Activated naive CD4-positive, alpha-beta T cell treated with anti-CD3 and anti-CD28 coated beads for 36 hours (primary cell): ENCODE measurements at regions of chr11 and their contacts with region 1.

Region 1: GRCh38 chr11:58524232-58525036 is 16.5 kb upstream of the OR5B21 start:
- DNase-seq: peak; percentile 67
- H3K4me3 Mint-ChIP-seq: peak overlapping the region; percentile 61
- H3K27ac Mint-ChIP-seq: peak overlapping the region; percentile 86
- H3K4me1 Mint-ChIP-seq: peaks cover 52% of the 10 kb centered on the region
- H3K27me3 Mint-ChIP-seq: no peaks in the 10 kb centered on the region

Region 2: DNA sequence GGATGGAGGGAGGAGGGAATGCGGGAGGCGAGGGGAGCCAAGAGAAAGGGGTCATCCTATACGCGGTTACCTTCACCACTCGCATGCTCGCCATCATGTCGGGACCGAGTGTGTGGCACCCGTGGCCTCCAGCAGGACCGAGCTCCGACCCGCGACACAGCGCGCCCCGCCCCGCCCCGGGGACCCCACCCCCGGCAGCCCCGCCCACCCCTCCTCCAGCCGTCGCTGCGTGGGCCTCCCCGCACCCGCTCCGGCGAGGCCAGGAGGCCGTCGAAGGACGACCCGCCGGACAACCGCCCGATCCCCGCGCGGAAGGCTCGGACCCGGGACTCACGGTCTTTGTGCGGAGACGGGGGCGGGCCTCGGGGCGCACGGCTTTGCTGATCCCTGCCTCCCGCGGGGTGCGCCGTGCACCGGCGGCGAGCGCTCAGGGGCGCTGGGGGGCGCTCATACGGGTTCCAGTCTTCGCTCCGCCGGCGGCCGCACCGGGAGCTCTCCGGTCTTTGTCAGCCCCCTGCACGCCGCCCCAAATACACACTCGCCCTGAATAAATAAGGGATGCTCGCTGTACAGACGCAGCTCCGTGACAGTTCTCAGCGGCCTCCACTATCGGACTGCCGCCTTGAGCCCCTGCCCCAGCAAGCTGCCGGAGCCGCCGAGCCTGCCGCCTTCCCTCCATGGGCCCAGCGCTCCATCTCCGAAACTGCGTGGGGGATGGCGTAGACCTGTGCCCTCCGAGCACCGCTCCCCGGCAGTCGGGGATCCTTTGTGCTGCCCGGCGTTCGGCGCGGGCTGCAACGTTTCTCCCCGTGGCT is 956.7 kb before region 1 on chr11 and contains the start of gene UBE2L6:
- CTCF ChIA-PET with region 1: no interaction called
- intact Hi-C with region 1: loop called (anchors 2 kb)
- DNase-seq: peak; percentile 66
- H3K4me3 Mint-ChIP-seq: peak within 1 kb of the TSS; percentile 97
- H3K27ac Mint-ChIP-seq: peak within 1 kb of the TSS; percentile 96
- H3K4me1 Mint-ChIP-seq: peaks cover 39% of the 10 kb centered on the region
- H3K27me3 Mint-ChIP-seq: no peaks in the 10 kb centered on the region
- total RNA-seq, gene UBE2L6: 187 to 194 TPM

Region 3: GRCh38 chr11:57800444-57801182 is 723.8 kb before region 1 on chr11:
- CTCF ChIA-PET with region 1: interaction called, 7 read pairs
- intact Hi-C with region 1: loop called (anchors 2 kb)
- DNase-seq: peak; percentile 12
- H3K4me3 Mint-ChIP-seq: no peak overlapping the region
- H3K27ac Mint-ChIP-seq: peak overlapping the region; percentile 60
- H3K4me1 Mint-ChIP-seq: peaks cover 25% of the 10 kb centered on the region
- H3K27me3 Mint-ChIP-seq: no peaks in the 10 kb centered on the region

Region 4: DNA sequence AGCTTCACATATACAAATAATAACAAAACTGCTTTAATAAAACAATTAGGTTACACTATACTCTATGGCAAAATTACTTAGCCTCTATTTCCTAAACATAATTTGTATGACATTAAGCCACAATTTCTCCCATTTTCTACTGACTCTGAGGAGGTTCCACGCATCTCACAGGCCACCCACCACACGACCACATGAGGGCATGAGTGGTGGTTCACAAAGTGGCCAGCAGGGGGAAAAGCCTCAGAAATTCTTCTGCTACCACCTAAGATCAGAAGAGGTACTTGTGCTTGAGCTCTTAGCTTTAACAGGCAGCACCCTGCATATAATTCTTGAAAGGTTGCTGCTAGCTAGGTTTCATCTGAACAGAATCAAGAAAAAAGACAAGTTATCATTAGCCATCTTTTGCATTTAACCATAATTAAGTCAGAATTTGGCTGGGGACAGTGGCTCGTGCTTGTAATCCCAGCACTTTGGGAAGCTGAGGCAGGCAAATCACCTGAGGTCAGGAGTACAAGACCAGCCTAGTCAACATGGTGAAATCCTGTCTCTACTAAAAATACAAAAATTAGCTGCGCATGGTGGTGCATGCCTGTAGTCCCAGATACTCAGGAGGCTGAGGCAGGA is 43.6 kb after region 1 on chr11:
- CTCF ChIA-PET with region 1: interaction called, 31 read pairs
- intact Hi-C with region 1: loop called (anchors 1 kb)
- DNase-seq: peak; percentile 83
- H3K4me3 Mint-ChIP-seq: peak overlapping the region; percentile 0
- H3K27ac Mint-ChIP-seq: peak overlapping the region; percentile 67
- H3K4me1 Mint-ChIP-seq: peaks cover 63% of the 10 kb centered on the region
- H3K27me3 Mint-ChIP-seq: no peaks in the 10 kb centered on the region

Region 5: GRCh38 chr11:58775066-58775708 is 250.8 kb after region 1 on chr11:
- CTCF ChIA-PET with region 1: no interaction called
- intact Hi-C with region 1: loop called (anchors 1 kb)
- DNase-seq: peak; percentile 8
- H3K4me3 Mint-ChIP-seq: no peak overlapping the region
- H3K27ac Mint-ChIP-seq: no peak overlapping the region
- H3K4me1 Mint-ChIP-seq: peaks cover 6% of the 10 kb centered on the region
- H3K27me3 Mint-ChIP-seq: no peaks in the 10 kb centered on the region

Region 6: GRCh38 chr11:59142530-59143507 is 618.4 kb after region 1 on chr11 and contains the start of gene FAM111A:
- CTCF ChIA-PET with region 1: no interaction called
- intact Hi-C with region 1: loop called (anchors 2 kb)
- DNase-seq: peak; percentile 88
- H3K4me3 Mint-ChIP-seq: peak within 1 kb of the TSS; percentile 95
- H3K27ac Mint-ChIP-seq: peak within 1 kb of the TSS; percentile 91
- H3K4me1 Mint-ChIP-seq: peaks cover 40% of the 10 kb centered on the region
- H3K27me3 Mint-ChIP-seq: no peaks in the 10 kb centered on the region
- total RNA-seq, gene FAM111A: 98.3 to 99.4 TPM